ENCODE measurements at regions of chr13 and their contacts with region 1.

Region 1: DNA sequence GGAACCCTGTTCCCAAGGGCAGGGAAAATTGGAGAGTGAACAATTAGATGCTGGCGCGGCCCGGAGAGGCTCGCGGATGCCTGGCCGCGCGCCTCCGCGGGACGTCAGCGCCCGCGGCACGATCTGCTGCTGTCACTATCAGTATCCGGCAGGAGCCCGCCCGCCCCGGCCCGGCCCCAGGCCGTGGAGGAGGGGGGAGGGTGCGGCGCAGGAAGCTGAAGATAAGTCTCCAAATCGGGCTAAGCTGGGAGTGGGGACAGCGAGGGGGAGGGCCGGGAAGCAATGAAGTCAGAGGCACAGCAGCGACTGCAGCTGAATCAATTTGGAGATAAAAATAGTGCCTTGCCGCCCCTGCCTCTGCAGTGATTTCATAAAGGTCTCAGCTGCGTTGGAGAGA is 441.5 kb upstream of the KLF12 start:
- DNase-seq: peak; percentile 5
- H3K4me3 ChIP-seq: peak overlapping the region; percentile 26 to 36 (median 27)
- H3K27ac ChIP-seq: no peak overlapping the region
- H3K4me1 ChIP-seq: no peaks in the 10 kb centered on the region
- H3K27me3 ChIP-seq: peaks cover 6% of the 10 kb centered on the region
- CTCF ChIP-seq: no peak

Region 2: GRCh38 chr13:74443631-74444030 is 132.1 kb before region 1 on chr13:
- CTCF ChIA-PET with region 1: no interaction called
- dilution Hi-C with region 1: no loop called
- in situ Hi-C with region 1: no loop called
- intact Hi-C with region 1: loop called (anchors 10 kb)
- DNase-seq: peak; percentile 79
- H3K4me3 ChIP-seq: peak overlapping the region in 2 of 3 experiments; percentile 28
- H3K27ac ChIP-seq: peak overlapping the region; percentile 85
- H3K4me1 ChIP-seq: peaks cover 34% of the 10 kb centered on the region
- H3K27me3 ChIP-seq: no peaks in the 10 kb centered on the region
- CTCF ChIP-seq: no peak